Psoas muscle (tissue), 8 donors: ENCODE measurements at regions of chr18 and their contacts with region 1.

Region 1: GRCh38 chr18:79217979-79218604 is 148.9 kb downstream of the ATP9B start:
- DNase-seq: peak; percentile 40 to 82
- ATAC-seq: peak; percentile 91 to 96 (median 94)
- H3K4me3 ChIP-seq: peak overlapping the region; percentile 61
- H3K27ac ChIP-seq: peak overlapping the region; percentile 87
- H3K4me1 ChIP-seq: peaks cover 10% of the 10 kb centered on the region
- H3K27me3 ChIP-seq: no peaks in the 10 kb centered on the region
- CTCF ChIP-seq: no peak

Region 2: GRCh38 chr18:79068937-79069791 is 148.9 kb before region 1 on chr18 and contains the start of gene ATP9B:
- intact Hi-C with region 1: loop called (anchors 10 kb)
- DNase-seq: peak; percentile 96 to 99
- ATAC-seq: peak; percentile 95 to 97 (median 96)
- H3K4me3 ChIP-seq: peak within 1 kb of the TSS; percentile 98
- H3K27ac ChIP-seq: peak within 1 kb of the TSS; percentile 99
- H3K4me1 ChIP-seq: peaks cover 20% of the 10 kb centered on the region
- H3K27me3 ChIP-seq: no peaks in the 10 kb centered on the region
- CTCF ChIP-seq: no peak
- total RNA-seq, gene ATP9B: 9.8 to 22.1 (median 14.4) TPM

Region 3: GRCh38 chr18:79275992-79276391 is 57.9 kb after region 1 on chr18:
- intact Hi-C with region 1: loop called in 1 of 2 experiments (anchors 10 kb)
- DNase-seq: no peak
- ATAC-seq: no peak
- H3K4me3 ChIP-seq: no peak overlapping the region
- H3K27ac ChIP-seq: no peak overlapping the region
- H3K4me1 ChIP-seq: no peaks in the 10 kb centered on the region
- H3K27me3 ChIP-seq: no peaks in the 10 kb centered on the region
- CTCF ChIP-seq: no peak